ENCODE measurements at regions of chr10 and their contacts with region 1.

Region 1: GRCh38 chr10:43461950-43462349 is 25.0 kb downstream of the ZNF487 start:
- DNase-seq: no peak
- ATAC-seq: peak; percentile 88 to 95 (median 92)
- H3K4me3 ChIP-seq: peak overlapping the region in 2 of 3 donors; percentile 17
- H3K27ac ChIP-seq: no peak overlapping the region
- H3K4me1 ChIP-seq: no peaks in the 10 kb centered on the region
- H3K27me3 ChIP-seq: no peaks in the 10 kb centered on the region
- CTCF ChIP-seq: peak; percentile 75 to 78 (median 77)
- POLR2A ChIP-seq: no peak

Region 2: DNA sequence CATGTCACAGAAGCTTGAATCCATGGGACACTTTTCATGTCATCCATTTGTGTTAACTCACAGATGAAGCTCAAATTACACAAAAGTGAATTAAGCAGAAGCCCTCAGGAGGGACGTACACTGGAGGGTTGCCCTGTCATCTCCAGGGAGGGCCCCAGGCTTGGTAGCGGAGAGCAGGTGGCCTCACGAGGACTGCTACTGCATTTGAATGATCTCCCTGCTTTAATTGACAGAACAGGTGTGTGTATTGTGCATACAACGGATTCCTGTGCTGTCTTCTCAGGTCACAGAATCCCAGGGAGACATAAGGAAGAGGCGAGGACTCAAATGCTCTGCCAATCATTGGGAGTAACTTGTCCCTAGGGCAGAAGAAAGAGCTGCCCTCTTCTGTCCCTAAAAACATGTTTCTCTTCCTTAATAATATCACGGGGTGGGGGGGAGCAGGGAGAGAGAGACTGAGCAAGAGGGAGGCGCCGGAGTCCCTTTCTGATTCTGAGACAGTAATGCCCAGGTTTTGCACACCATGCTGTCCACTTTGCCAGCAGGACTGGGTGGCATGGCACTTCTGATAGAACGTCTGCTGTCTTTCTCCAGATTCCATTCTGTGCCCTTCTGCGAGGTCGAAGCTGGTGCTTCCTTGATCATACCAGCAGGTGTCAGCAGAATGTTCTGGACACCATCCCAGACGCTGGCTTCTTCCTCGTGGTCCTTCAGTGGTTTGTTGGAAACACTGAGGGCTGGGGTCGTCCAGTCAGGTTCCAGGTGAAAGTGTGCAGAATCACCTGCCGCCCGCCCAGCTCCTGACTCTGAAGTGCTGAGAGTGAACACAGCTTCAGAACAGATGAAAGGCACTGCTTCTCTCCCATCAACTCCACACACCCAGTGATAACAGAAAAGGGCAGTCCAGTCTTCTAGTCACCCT is 168.9 kb before region 1 on chr10:
- intact Hi-C with region 1: loop called in 1 of 2 experiments (anchors 10 kb)
- DNase-seq: peak in 2 of 3 donors; percentile 52 to 62
- ATAC-seq: peak; percentile 92 to 98 (median 94)
- H3K4me3 ChIP-seq: no peak overlapping the region
- H3K27ac ChIP-seq: no peak overlapping the region
- H3K4me1 ChIP-seq: no peaks in the 10 kb centered on the region
- H3K27me3 ChIP-seq: no peaks in the 10 kb centered on the region
- CTCF ChIP-seq: peak; percentile 71 to 80 (median 74)
- POLR2A ChIP-seq: no peak

Region 3: GRCh38 chr10:43380610-43381222 is 81.2 kb before region 1 on chr10:
- intact Hi-C with region 1: no loop called
- DNase-seq: no peak
- ATAC-seq: peak in 1 of 4 donors; percentile 25
- H3K4me3 ChIP-seq: no peak overlapping the region
- H3K27ac ChIP-seq: no peak overlapping the region
- H3K4me1 ChIP-seq: no peaks in the 10 kb centered on the region
- H3K27me3 ChIP-seq: no peaks in the 10 kb centered on the region
- CTCF ChIP-seq: peak in 1 of 4 donors; percentile 21
- POLR2A ChIP-seq: no peak